Lower leg skin (tissue), 4 donors: ENCODE measurements at regions of chr20 and their contacts with region 1.

Region 1: GRCh38 chr20:53578492-53579222 is 15.0 kb downstream of the ZNF217 start:
- DNase-seq: peak; percentile 75 to 85
- H3K4me3 ChIP-seq: no peak overlapping the region
- CTCF ChIP-seq: peak in 1 of 3 donors; percentile 96
- POLR2A ChIP-seq: no peak

Region 2: DNA sequence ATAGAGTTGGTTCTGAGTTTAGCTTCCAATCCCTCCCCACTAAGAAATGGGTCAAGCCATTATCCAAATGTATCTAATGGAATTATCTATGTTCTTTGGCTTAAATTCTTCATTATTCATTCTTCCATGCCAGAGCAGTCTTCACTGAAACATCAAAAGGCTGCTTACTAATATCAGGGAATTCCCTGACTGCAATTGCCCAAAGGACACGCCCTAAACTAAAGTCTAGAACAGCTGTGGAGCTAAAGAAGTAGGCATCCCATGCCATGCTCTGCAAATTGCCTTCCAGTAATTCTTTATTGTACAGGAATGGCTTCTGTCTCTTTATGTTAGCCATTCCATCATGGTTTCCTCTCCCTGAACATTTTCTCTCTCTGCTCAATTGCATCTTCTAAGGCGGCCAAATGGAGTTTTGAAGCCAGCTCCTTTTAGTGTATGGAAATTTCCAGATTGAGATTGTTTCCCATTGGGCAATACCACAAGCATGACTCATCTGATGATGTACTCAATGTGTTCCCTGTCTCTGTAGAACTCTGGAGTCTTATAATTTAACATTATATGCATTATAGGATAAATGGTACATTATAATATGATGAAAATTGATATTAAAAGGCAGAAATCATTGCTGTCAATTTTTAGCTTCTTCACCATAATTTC is 635.3 kb before region 1 on chr20:
- intact Hi-C with region 1: no loop called
- DNase-seq: peak in 1 of 2 donors; percentile 30
- H3K4me3 ChIP-seq: no peak overlapping the region
- CTCF ChIP-seq: no peak
- POLR2A ChIP-seq: no peak

Region 3: DNA sequence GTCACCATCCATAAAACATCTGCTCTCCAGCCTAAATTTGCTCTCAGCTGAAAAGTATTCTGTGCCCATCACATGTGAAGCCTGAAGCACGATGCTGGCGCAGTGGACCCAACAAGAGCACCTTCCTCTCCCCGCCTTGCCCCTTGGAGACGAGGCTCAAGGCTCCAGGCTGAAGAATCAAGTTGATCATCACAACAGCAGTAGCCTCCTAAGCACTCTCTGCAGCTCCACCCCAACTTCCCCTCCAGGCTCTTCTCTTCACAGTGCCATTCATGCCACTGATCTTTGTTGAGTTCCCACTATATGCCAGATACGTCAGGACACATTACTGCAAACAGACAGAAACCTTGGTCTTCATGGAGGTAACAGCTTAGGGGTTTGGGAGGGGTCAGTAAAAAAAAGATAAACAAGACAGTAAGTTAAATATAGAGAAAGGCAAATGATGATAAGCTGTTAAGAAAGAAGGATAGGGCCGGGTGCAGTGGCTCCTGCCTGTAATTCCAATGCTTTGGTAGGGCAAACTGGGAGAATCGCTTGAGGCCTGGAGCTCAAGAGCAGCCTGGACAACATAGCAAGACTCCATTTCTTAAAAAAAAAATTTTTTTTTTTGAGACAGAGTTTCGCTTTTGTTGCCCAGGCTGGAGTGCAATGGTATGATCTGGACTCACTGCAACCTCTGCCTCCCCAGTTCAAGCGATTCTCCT is 56.7 kb after region 1 on chr20:
- intact Hi-C with region 1: no loop called
- DNase-seq: peak in 1 of 2 donors; percentile 60
- H3K4me3 ChIP-seq: no peak overlapping the region
- CTCF ChIP-seq: no peak
- POLR2A ChIP-seq: no peak

Region 4: DNA sequence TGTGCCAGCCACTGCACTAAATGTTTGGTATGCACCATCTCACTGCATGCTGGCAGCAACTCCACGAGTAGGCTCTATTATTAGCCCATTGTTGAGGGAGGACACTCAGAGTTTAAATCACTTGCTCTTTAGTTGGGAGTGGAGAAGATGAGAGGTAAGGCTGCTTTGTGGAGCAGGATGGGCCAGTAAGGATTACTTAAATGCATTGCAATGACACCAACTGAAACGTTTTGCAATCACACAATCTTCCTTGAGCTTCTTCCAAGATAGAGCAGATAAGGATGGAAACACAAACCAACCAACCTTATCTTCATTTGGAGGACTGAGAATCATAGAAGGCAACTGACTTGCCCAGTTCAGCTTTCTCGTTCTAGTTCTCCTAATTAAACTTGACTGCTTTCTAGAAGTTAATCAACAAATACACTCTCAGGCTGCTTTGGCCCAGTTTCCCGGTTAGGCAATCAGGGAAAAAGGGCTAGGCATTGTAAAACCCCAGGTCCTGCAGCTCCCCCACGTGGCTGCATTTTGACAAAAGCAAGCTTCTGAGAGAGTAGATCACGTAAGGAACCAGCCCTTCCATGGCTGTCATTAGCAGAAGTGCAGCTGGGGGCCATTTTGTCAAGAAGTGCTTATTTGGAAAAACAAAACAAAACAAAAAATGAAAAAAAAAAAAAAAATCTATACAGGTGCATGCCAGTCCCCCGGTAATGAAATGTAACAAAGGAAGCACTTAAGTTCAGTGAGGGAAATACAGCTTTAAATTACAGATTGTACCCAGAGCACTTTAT is 361.1 kb after region 1 on chr20:
- intact Hi-C with region 1: loop called (anchors 5 kb)
- DNase-seq: peak; percentile 96 to 98
- H3K4me3 ChIP-seq: no peak overlapping the region
- CTCF ChIP-seq: peak in 1 of 3 donors; percentile 55
- POLR2A ChIP-seq: no peak